ENCODE measurements at regions of chr3 and their contacts with region 1.

Region 1: DNA sequence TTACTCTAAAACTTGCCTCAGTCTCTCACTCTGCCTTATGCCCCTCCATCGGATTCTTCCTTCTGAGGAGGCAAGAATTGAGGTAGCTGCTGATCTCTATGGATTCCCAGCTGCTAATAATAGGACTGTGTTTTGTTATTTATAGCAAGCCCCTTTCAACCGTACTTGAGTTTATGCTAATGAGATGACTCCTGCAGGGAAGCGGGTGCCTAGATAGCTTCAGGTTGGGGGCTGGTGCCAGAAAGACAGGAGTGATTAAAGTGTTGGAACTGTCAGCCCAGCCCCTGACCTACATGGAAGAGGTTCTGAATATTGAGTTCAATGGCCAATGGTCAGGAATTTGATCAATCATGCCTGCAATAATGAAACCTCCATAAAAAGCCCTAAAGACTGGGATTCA is 21.8 kb upstream of the LIMD1 start:
- DNase-seq: no peak
- H3K4me3 ChIP-seq: no peak overlapping the region
- H3K27ac ChIP-seq: no peak overlapping the region
- H3K4me1 ChIP-seq: peaks cover 19% of the 10 kb centered on the region
- H3K27me3 ChIP-seq: no peaks in the 10 kb centered on the region
- CTCF ChIP-seq: no peak

Region 2: DNA sequence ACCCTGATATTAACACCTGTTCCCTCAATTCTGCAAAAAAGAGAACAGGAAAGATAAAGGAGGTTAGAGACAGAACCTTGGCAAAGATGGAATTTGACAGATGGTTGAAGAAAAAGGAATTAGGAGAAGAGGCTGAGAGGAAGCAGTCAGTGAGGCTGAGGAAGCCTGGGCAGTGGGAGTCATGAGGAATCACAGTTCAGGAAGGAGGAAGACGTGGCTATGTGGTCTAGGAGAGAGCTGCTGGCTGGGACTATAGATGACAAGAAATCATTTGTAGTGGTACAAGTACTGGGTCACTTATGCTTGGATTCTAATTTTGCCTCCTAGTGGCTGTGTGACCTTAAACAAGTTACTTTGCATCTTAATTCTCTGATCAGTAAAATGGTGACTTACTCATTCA is 135.4 kb before region 1 on chr3:
- CTCF ChIA-PET with region 1: no interaction called
- POLR2A ChIA-PET with region 1: no interaction called
- intact Hi-C with region 1: no loop called
- DNase-seq: no peak
- H3K4me3 ChIP-seq: no peak overlapping the region
- H3K27ac ChIP-seq: no peak overlapping the region
- H3K4me1 ChIP-seq: no peaks in the 10 kb centered on the region
- H3K27me3 ChIP-seq: no peaks in the 10 kb centered on the region
- CTCF ChIP-seq: no peak

Region 3: DNA sequence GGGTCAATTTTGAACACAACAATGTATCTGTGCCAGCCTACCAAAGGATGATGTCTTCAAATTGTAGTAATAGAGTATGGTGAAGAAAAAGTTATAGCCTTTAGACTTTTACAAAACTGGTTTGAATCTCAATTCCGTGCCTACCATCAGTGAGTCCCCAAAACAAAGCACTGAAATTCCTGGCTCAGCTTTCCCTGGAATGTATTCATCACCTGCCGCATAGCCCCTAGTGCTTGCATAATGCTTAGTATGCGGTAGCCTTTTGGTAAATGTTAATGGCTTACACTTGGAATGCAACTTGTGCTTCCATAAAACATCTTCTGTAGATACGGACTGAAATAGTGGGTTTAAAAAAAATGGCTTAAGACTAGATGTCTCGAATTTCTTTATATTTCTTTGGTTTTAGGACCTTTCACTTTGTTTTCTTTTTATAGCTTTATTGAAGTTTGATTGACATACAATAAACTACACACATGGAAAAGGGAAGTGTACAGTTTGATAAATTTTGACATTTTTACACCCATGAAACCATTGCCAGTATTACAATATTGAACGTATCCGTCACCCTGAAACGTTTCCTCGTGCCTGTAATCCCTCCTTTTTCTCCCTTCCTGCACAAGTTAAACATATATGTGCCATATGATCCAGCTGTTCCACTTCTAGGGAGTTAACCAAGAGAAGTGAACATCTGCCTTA is 128.6 kb after region 1 on chr3:
- CTCF ChIA-PET with region 1: no interaction called
- POLR2A ChIA-PET with region 1: no interaction called
- intact Hi-C with region 1: no loop called
- DNase-seq: no peak
- H3K4me3 ChIP-seq: no peak overlapping the region
- H3K27ac ChIP-seq: no peak overlapping the region
- H3K4me1 ChIP-seq: no peaks in the 10 kb centered on the region
- H3K27me3 ChIP-seq: no peaks in the 10 kb centered on the region
- CTCF ChIP-seq: no peak

Region 4: GRCh38 chr3:46334741-46335478 is 762.2 kb after region 1 on chr3:
- CTCF ChIA-PET with region 1: no interaction called
- POLR2A ChIA-PET with region 1: no interaction called
- intact Hi-C with region 1: no loop called
- DNase-seq: peak in 1 of 2 experiments; percentile 70
- H3K4me3 ChIP-seq: no peak overlapping the region
- H3K27ac ChIP-seq: peak overlapping the region; percentile 20; the same call in 1 of the 2 replicates
- H3K4me1 ChIP-seq: no peaks in the 10 kb centered on the region; the same call in 1 of the 2 replicates
- H3K27me3 ChIP-seq: no peaks in the 10 kb centered on the region
- CTCF ChIP-seq: no peak

Region 5: DNA sequence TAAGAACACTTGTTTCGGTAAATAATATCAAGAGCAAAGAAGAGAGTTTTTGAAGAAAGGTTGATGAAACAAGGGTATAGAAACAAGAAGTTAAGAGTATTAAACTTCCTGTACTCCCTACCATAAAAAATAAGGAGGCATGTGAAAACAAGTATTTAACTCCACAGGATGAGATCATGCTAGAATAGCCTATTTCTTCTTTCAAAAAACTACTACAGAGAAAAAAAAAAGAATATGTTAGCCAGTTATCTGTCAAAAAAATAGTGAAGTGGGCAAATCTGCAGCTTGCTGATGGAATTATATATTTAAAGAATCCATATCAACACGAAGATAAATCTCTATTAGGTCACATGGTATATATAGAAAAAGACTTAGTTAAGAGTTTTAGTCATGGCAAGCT is 1557.8 kb after region 1 on chr3:
- CTCF ChIA-PET with region 1: no interaction called
- POLR2A ChIA-PET with region 1: interaction called, 13 read pairs
- intact Hi-C with region 1: no loop called
- DNase-seq: no peak
- H3K4me3 ChIP-seq: no peak overlapping the region
- H3K27ac ChIP-seq: no peak overlapping the region
- H3K4me1 ChIP-seq: no peaks in the 10 kb centered on the region
- H3K27me3 ChIP-seq: no peaks in the 10 kb centered on the region
- CTCF ChIP-seq: no peak

Measured in PC-9 (cell line).